Sigmoid colon (tissue), 7 donors: ENCODE measurements at regions of chr12 and their contacts with region 1.

Region 1: DNA sequence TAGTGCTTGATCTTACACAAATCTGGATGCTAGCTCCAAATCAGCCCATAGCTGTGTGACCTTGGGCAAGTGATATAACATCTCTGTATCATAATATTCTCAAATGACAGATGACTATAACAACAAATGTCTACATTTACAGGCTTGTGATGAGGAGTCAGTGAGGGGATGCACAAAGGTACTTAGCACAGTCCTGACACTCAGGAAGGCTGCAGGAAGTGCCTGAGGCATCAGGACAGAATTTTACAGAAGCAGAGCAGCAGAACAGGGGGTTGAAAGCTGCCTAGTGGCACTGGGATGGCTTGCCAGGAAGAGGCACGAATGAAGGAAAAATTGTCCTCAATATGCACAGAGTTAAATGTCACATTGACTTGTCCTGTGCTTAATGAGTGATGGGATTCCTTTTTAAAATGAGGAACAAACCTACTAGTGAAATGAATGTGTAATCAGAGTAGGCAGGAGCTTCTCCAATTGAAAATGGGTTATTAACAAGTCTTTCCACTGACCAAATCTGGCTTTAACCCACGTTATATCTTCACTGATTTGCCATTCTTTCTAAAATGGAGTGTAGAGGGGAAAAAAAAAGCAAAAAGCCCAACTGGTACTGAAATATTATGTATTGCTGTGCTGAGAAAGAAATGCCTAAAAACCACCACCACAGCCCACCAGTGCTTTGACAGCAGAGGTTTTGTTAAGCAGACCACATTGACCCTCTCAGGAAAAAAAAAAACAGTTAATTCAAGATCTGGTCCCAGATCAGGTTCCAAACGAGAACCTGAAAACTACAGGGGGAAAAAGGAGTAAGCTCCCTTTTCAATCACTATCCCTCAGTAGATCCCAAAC is 11.6 kb downstream of the BTG1 start:
- DNase-seq: no peak
- H3K4me3 ChIP-seq: no peak overlapping the region
- H3K27ac ChIP-seq: peak overlapping the region in 2 of 4 donors; percentile 6 to 16
- H3K4me1 ChIP-seq: peaks cover 0 to 81% (median 69%) of the 10 kb centered on the region in 4 donors
- H3K27me3 ChIP-seq: no peaks in the 10 kb centered on the region
- CTCF ChIP-seq: no peak
- EP300 ChIP-seq: no peak
- POLR2A ChIP-seq: no peak

Region 2: DNA sequence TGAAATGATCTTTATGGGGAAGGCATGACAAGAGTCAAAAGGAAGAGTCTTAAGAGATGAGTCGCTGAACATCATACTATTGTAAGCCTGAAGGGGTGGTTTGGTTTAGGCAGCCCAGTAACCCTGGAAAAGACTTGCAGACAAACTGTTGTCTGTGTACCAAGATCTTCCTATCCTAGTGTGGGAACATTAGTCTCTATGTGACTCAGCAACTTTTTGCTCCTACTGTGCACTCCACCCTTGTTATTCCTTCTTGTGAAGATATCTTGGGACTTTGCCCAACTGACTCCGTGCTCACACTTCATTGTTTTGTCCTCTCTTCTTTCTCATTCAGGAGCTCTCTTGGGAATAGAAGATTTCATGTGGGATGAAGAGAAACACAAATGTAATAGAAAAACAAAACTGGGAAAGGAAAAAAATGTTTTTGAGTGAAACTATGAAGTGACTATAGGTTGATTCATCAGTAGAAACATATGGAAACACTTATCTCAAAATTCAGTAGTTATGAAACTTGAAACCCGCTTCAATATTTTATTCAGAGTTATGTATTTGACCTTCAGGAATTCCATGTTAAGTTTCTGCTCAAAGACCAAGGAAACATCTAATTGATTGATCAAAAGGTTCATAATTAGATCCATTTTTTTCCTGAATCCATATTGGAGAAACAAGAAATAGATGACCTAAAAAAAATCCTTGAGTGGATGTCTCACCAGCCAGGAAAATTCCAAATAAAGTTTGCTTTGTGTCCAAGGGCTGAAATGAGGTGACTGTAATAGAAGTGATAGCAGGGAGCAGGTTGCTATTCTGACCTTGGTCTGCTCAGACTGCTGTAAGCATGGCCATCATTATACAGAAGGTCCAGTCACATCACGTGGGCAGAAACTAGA is 55.6 kb before region 1 on chr12:
- intact Hi-C with region 1: loop called (anchors 5 kb)
- DNase-seq: peak; percentile 69
- H3K4me3 ChIP-seq: no peak overlapping the region
- H3K27ac ChIP-seq: peak overlapping the region in 3 of 4 donors; percentile 38 to 65 (median 41)
- H3K4me1 ChIP-seq: peaks cover 0 to 34% (median 22%) of the 10 kb centered on the region in 4 donors
- H3K27me3 ChIP-seq: no peaks in the 10 kb centered on the region
- CTCF ChIP-seq: no peak
- EP300 ChIP-seq: no peak
- POLR2A ChIP-seq: no peak

Region 3: GRCh38 chr12:92912052-92912451 is 778.0 kb after region 1 on chr12:
- intact Hi-C with region 1: no loop called
- DNase-seq: no peak
- H3K4me3 ChIP-seq: no peak overlapping the region
- H3K27ac ChIP-seq: no peak overlapping the region
- H3K4me1 ChIP-seq: peaks cover 0 to 8% (median 2%) of the 10 kb centered on the region in 4 donors
- H3K27me3 ChIP-seq: no peaks in the 10 kb centered on the region
- CTCF ChIP-seq: no peak
- EP300 ChIP-seq: no peak
- POLR2A ChIP-seq: no peak